Breast epithelium (tissue), 4 donors: ENCODE measurements at regions of chr9 and their contacts with region 1.

Region 1: GRCh38 chr9:31848505-31849285 is 535.7 kb upstream of the ACO1 start:
- DNase-seq: no peak
- H3K4me3 ChIP-seq: no peak overlapping the region
- H3K27ac ChIP-seq: no peak overlapping the region
- H3K4me1 ChIP-seq: no peaks in the 10 kb centered on the region
- H3K27me3 ChIP-seq: no peaks in the 10 kb centered on the region
- CTCF ChIP-seq: no peak
- POLR2A ChIP-seq: no peak

Region 2: DNA sequence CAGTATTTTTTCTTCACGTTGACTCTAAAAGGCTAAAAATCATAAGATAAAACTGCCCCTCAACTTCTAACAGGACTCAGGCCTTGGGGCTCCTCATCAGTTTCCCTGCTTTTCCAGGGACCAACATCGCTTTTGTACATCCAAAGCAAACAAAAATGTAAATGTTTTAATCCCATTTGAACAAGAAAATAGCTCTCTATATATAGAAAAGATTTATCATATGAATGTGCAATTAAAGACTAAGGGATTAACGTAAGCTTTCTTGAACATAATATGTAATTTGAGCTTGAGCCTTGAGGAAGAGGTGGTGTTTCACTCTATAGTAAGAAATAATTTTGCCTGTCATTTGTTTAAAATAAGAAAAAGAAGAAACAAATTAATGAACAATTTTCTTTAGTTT is 11.5 kb before region 1 on chr9:
- intact Hi-C with region 1: no loop called
- DNase-seq: no peak
- H3K4me3 ChIP-seq: no peak overlapping the region
- H3K27ac ChIP-seq: no peak overlapping the region
- H3K4me1 ChIP-seq: no peaks in the 10 kb centered on the region
- H3K27me3 ChIP-seq: no peaks in the 10 kb centered on the region
- CTCF ChIP-seq: no peak
- POLR2A ChIP-seq: no peak

Region 3: DNA sequence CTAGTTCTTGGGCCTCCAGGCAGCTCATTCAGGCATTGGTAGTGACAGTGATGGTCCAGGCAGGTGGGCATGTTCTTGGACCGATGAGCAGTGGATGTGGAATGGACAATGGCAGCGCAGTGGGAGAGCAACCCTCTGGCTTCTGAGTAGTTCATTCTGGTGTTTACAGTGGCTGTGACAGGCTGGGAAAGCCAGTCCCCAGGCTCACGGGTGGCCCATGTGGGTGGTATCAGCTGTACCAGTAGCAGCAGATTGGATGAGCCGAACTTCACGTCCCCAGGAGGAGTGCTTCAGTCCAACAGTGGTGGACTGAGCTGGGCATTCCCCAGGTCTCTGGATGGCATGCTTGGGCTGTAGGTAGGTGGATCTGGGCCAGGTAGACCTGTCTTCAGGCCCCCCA is 20.1 kb after region 1 on chr9:
- intact Hi-C with region 1: no loop called
- DNase-seq: no peak
- H3K4me3 ChIP-seq: no peak overlapping the region
- H3K27ac ChIP-seq: no peak overlapping the region
- H3K4me1 ChIP-seq: no peaks in the 10 kb centered on the region
- H3K27me3 ChIP-seq: no peaks in the 10 kb centered on the region
- CTCF ChIP-seq: no peak
- POLR2A ChIP-seq: no peak

Region 4: GRCh38 chr9:31894008-31894407 is 45.3 kb after region 1 on chr9:
- intact Hi-C with region 1: loop called (anchors 2 kb)
- DNase-seq: no peak
- H3K4me3 ChIP-seq: no peak overlapping the region
- H3K27ac ChIP-seq: no peak overlapping the region
- H3K4me1 ChIP-seq: no peaks in the 10 kb centered on the region
- H3K27me3 ChIP-seq: no peaks in the 10 kb centered on the region
- CTCF ChIP-seq: no peak
- POLR2A ChIP-seq: no peak